ENCODE measurements at regions of chr3 and their contacts with region 1.

Region 1: GRCh38 chr3:139111392-139112229 is 66.9 kb upstream of the PRR23C start:
- DNase-seq: peak; percentile 35
- H3K4me3 ChIP-seq: no peak overlapping the region
- H3K27ac ChIP-seq: no peak overlapping the region
- H3K4me1 ChIP-seq: no peaks in the 10 kb centered on the region
- H3K27me3 ChIP-seq: no peaks in the 10 kb centered on the region
- CTCF ChIP-seq: peak; percentile 83 to 88

Region 2: DNA sequence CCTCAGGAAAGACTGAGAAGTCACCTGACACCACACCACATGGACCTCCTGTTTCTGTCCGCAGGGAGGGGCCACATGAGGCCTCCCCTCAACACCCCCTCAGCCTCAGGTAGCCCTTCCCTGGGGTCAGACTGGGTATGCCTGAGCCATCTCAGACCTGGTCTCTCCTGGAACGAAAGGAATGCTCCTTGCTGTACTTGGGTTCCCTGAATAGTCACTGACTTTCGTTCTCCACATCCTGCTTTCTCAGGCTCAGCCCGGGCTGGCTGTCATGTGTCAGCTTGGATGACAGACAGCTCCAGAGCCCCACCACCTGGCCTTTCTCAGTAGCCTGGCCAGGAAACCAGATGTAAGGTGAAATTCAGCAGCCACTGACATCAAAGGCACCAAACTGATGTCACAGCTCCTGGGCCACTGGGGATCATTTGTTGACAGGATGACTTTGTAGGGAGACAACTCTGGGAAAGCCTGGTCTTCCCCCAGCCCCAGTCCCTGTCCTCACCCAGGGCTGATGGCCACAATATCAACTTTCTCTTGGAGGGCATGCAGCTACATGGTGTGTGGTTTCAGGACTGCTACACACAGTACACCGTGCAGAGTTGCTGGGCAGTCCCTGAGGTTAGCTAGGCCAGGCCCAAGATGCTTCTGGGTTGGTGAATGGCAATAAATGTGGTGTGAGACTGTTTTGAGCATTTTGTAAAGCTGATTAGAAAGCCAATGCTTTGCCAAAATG is 90.8 kb after region 1 on chr3:
- CTCF ChIA-PET with region 1: interaction called, 5 read pairs
- dilution Hi-C with region 1: no loop called
- in situ Hi-C with region 1: no loop called
- intact Hi-C with region 1: loop called (anchors 2 kb)
- DNase-seq: peak; percentile 53
- H3K4me3 ChIP-seq: no peak overlapping the region
- H3K27ac ChIP-seq: no peak overlapping the region
- H3K4me1 ChIP-seq: peaks cover 11% of the 10 kb centered on the region
- H3K27me3 ChIP-seq: no peaks in the 10 kb centered on the region
- CTCF ChIP-seq: peak; percentile 16 to 47

Region 3: GRCh38 chr3:139213936-139214335 is 102.3 kb after region 1 on chr3:
- CTCF ChIA-PET with region 1: no interaction called
- dilution Hi-C with region 1: no loop called
- in situ Hi-C with region 1: no loop called
- intact Hi-C with region 1: no loop called
- DNase-seq: no peak
- H3K4me3 ChIP-seq: no peak overlapping the region
- H3K27ac ChIP-seq: no peak overlapping the region
- H3K4me1 ChIP-seq: peaks cover 12% of the 10 kb centered on the region
- H3K27me3 ChIP-seq: no peaks in the 10 kb centered on the region
- CTCF ChIP-seq: no peak

Region 4: GRCh38 chr3:139281522-139282196 is 170.0 kb after region 1 on chr3:
- CTCF ChIA-PET with region 1: no interaction called
- dilution Hi-C with region 1: no loop called
- in situ Hi-C with region 1: no loop called
- intact Hi-C with region 1: loop called (anchors 5 kb)
- DNase-seq: no peak
- H3K4me3 ChIP-seq: no peak overlapping the region
- H3K27ac ChIP-seq: no peak overlapping the region
- H3K4me1 ChIP-seq: no peaks in the 10 kb centered on the region
- H3K27me3 ChIP-seq: no peaks in the 10 kb centered on the region
- CTCF ChIP-seq: no peak

Region 5: DNA sequence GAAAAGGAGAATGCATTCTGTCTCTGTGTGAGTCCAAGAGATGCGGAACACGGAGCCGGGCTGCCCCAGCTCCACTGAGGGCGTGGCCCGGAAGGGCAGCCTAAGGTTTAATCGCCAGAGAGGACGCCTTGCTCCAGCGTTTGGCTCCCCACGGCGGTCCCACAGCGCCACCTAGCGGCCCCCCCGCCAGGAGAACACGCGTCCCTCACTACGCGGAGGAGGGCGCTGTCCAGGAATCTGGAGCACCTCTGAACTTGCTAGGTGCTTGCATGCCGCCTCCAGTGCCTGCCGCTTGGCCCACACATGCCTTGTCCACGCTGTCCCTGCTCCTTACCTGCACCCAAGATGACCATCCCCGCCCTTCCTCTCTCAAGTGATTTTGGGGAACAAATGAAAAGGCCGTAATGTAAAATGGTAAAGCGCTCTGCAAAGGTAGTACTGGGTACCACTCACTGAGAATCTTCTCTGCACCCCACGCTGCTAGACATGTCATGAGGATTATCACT is 217.8 kb after region 1 on chr3:
- CTCF ChIA-PET with region 1: interaction called, 6 read pairs
- dilution Hi-C with region 1: no loop called
- in situ Hi-C with region 1: loop called (anchors 10 to 25 kb)
- intact Hi-C with region 1: loop called (anchors 2 kb)
- DNase-seq: peak; percentile 72
- H3K4me3 ChIP-seq: no peak overlapping the region
- H3K27ac ChIP-seq: no peak overlapping the region
- H3K4me1 ChIP-seq: no peaks in the 10 kb centered on the region
- H3K27me3 ChIP-seq: no peaks in the 10 kb centered on the region
- CTCF ChIP-seq: peak; percentile 96 to 99